ENCODE measurements at regions of chr12 and their contacts with region 1.

Region 1: GRCh38 chr12:47715393-47715876 is 9.6 kb upstream of the RPAP3 start:
- DNase-seq: peak; percentile 74 to 81 (median 78)
- H3K4me3 ChIP-seq: no peak overlapping the region
- H3K4me3 Mint-ChIP-seq: no peak overlapping the region
- H3K27ac ChIP-seq: no peak overlapping the region
- H3K27ac Mint-ChIP-seq: peak overlapping the region in 5 of 7 donors; percentile 24 to 77 (median 65)
- H3K4me1 ChIP-seq: peaks cover 18% of the 10 kb centered on the region
- H3K4me1 Mint-ChIP-seq: peaks cover 11 to 24% (median 20%) of the 10 kb centered on the region in 4 donors
- H3K27me3 ChIP-seq: no peaks in the 10 kb centered on the region
- H3K27me3 Mint-ChIP-seq: no peaks in the 10 kb centered on the region

Region 2: GRCh38 chr12:47758834-47759690 is 43.6 kb after region 1 on chr12 and contains the start of gene RAPGEF3:
- CTCF ChIA-PET with region 1: interaction called, 10 read pairs
- POLR2A ChIA-PET with region 1: no interaction called
- intact Hi-C with region 1: no loop called
- DNase-seq: peak; percentile 50 to 78 (median 63)
- H3K4me3 ChIP-seq: peak within 1 kb of the TSS; percentile 42 to 52
- H3K4me3 Mint-ChIP-seq: peak within 1 kb of the TSS; percentile 72 to 83 (median 80)
- H3K27ac ChIP-seq: peak within 1 kb of the TSS; percentile 55
- H3K27ac Mint-ChIP-seq: peak within 1 kb of the TSS in 6 of 7 donors; percentile 12 to 74 (median 45)
- H3K4me1 ChIP-seq: peaks cover 40% of the 10 kb centered on the region
- H3K4me1 Mint-ChIP-seq: peaks cover 18 to 27% (median 23%) of the 10 kb centered on the region in 4 donors
- H3K27me3 ChIP-seq: no peaks in the 10 kb centered on the region
- H3K27me3 Mint-ChIP-seq: no peaks in the 10 kb centered on the region
- total RNA-seq, gene RAPGEF3: 0.15 to 0.39 TPM

Region 3: DNA sequence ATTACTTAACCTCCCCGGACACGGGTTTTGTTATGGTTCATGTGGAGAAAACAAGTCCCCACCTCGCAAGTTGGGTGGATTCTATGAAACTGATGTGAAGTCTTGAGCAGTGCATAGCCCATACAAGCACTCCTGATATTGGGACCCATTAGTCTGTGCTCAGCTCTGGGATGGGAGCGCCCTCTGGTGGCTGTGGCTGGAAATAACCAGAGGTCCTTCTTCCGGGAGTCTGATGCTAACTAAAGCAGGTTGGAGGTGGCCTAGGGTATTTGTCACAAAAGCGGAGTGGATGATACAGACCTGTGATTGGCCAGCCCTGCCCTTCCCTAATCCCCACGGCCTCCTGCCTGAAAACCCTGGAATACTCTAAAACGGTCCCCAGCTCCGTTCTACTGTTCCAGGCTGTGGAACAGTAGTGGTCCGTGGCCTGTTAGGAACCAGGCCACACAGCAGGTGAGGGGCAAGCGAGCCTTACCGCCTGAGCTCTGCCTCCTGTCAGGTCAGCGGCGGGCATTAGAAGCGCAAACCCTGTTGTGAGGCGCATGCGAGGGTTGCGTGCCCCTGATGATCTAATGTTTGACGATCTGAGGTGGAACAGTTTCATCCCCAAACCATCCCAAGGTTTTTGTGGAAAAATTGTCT is 64.0 kb after region 1 on chr12:
- CTCF ChIA-PET with region 1: interaction called, 318 read pairs
- POLR2A ChIA-PET with region 1: interaction called, 3 read pairs
- intact Hi-C with region 1: loop called (anchors 1 kb)
- DNase-seq: peak; percentile 84 to 87 (median 86)
- H3K4me3 ChIP-seq: no peak overlapping the region
- H3K4me3 Mint-ChIP-seq: peak overlapping the region in 1 of 8 donors; percentile 12
- H3K27ac ChIP-seq: no peak overlapping the region
- H3K27ac Mint-ChIP-seq: peak overlapping the region in 4 of 7 donors; percentile 3 to 83 (median 81)
- H3K4me1 ChIP-seq: peaks cover 7% of the 10 kb centered on the region
- H3K4me1 Mint-ChIP-seq: peaks cover 7 to 24% (median 12%) of the 10 kb centered on the region in 4 donors
- H3K27me3 ChIP-seq: no peaks in the 10 kb centered on the region
- H3K27me3 Mint-ChIP-seq: no peaks in the 10 kb centered on the region

Region 4: GRCh38 chr12:47949441-47950308 is 234.2 kb after region 1 on chr12:
- CTCF ChIA-PET with region 1: interaction called, 4 read pairs
- POLR2A ChIA-PET with region 1: no interaction called
- intact Hi-C with region 1: loop called (anchors 1 kb)
- DNase-seq: peak in 4 of 5 donors; percentile 28 to 38 (median 34)
- H3K4me3 ChIP-seq: no peak overlapping the region
- H3K4me3 Mint-ChIP-seq: no peak overlapping the region
- H3K27ac ChIP-seq: no peak overlapping the region
- H3K27ac Mint-ChIP-seq: no peak overlapping the region
- H3K4me1 ChIP-seq: no peaks in the 10 kb centered on the region
- H3K4me1 Mint-ChIP-seq: no peaks in the 10 kb centered on the region
- H3K27me3 ChIP-seq: no peaks in the 10 kb centered on the region
- H3K27me3 Mint-ChIP-seq: peaks cover 3 to 6% of the 10 kb centered on the region in 2 donors

Region 5: DNA sequence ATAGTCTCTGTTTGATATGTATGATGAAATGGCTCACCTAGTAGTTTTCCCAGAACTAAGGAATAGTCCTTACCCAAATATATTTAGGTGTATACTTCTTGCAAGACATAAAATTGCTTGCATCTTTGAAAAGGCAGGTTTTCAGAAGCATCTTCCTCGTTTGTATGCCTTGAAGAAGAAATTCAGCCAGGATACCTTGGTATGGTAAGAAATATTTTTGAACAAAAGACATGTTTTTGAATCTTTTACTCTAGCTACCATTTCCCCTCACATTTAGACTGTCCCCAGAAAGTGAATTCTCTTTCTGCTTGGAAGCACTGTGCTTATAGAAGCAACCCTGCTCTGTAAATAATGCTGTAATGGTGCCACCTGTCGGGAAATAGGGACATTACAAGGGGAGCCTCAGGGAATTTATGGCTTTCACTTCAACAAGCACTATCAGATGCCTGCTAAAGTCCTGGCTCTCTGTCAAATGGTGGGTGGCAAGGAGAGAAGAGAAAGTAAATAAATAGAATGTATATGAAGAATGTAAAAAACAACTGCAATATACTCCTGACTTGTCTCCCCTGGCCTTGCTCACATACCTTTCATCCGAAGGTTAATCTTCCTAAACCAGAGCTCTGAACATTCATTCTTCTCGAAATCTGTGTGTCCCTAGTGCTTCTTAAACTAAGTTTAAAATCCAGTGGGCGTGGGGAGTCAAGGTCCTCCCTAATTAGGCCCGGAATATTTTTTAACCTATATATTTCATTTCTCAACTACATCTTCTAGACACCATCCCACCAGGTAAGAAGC is 474.1 kb after region 1 on chr12:
- CTCF ChIA-PET with region 1: no interaction called
- POLR2A ChIA-PET with region 1: no interaction called
- intact Hi-C with region 1: loop called (anchors 2 kb)
- DNase-seq: peak; percentile 59 to 65 (median 64)
- H3K4me3 ChIP-seq: no peak overlapping the region
- H3K4me3 Mint-ChIP-seq: no peak overlapping the region
- H3K27ac ChIP-seq: no peak overlapping the region
- H3K27ac Mint-ChIP-seq: peak overlapping the region in 1 of 7 donors; percentile 14
- H3K4me1 ChIP-seq: peaks cover 1% of the 10 kb centered on the region
- H3K4me1 Mint-ChIP-seq: peaks cover 0 to 8% (median 2%) of the 10 kb centered on the region in 4 donors
- H3K27me3 ChIP-seq: no peaks in the 10 kb centered on the region
- H3K27me3 Mint-ChIP-seq: peaks cover 16 to 18% of the 10 kb centered on the region in 2 donors